Activated CD4-positive, alpha-beta T cell treated with anti-CD3 and anti-CD28 coated beads for 36 hours (primary cell): ENCODE measurements at regions of chr11 and their contacts with region 1.

Region 1: DNA sequence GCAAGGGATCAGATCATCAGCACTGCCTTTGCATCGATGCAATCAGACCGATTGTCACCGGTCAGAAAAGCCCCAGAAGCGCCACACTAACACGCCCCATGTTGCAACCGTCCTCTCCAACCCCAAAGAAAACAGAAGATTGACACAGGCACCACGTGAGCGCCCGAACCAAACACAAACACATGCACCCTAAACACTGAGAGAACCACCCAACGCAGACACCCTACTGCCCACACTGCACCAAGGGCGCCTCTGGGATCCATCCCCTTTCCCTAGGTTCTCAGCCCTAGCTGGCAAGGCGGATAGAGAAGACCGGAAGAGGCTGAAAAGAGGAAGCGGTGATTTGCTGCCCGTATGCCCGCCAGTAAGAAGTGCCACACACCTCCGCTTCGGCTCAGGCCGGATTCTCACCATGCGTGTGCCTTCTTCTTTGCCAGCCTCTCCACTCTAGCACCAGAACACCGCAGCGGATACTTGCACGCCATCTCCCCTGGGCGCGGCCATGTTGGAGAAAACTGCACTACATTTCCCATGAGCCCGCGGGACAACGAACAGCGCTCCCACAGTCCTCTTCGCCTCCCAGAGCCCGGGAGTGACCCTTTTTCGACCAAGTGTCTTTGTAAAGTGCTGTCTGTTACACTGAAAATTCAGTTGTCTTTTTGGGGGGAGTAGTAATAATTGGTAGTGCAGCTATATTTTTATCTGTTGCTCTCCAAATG is at the start of gene ALKBH8:
- DNase-seq: peak; percentile 90
- ATAC-seq: peak; percentile 92
- H3K4me3 Mint-ChIP-seq: peak within 1 kb of the TSS; percentile 93
- H3K27ac Mint-ChIP-seq: peak within 1 kb of the TSS; percentile 98
- H3K4me1 Mint-ChIP-seq: peaks cover 54% of the 10 kb centered on the region
- H3K27me3 Mint-ChIP-seq: no peaks in the 10 kb centered on the region
- total RNA-seq, gene ALKBH8: 11.4 to 12.6 TPM

Region 2: GRCh38 chr11:107457558-107458271 is 107.7 kb before region 1 on chr11 and contains the start of gene CWF19L2:
- CTCF ChIA-PET with region 1: interaction called, 3 read pairs
- POLR2A ChIA-PET with region 1: no interaction called
- intact Hi-C with region 1: loop called (anchors 1 to 2 kb)
- DNase-seq: peak; percentile 94
- ATAC-seq: peak; percentile 99
- H3K4me3 Mint-ChIP-seq: peak within 1 kb of the TSS; percentile 84
- H3K27ac Mint-ChIP-seq: peak within 1 kb of the TSS; percentile 95
- H3K4me1 Mint-ChIP-seq: peaks cover 21% of the 10 kb centered on the region
- H3K27me3 Mint-ChIP-seq: no peaks in the 10 kb centered on the region
- total RNA-seq, gene CWF19L2: 14.1 to 14.3 TPM

Region 3: GRCh38 chr11:107590460-107591377 is 25.3 kb after region 1 on chr11 and contains the start of gene ELMOD1:
- CTCF ChIA-PET with region 1: interaction called, 7 read pairs
- POLR2A ChIA-PET with region 1: interaction called, 3 read pairs
- intact Hi-C with region 1: loop called in 1 of 2 experiments (anchors 1 kb)
- DNase-seq: peak; percentile 69
- ATAC-seq: peak; percentile 66
- H3K4me3 Mint-ChIP-seq: peak within 1 kb of the TSS; percentile 73
- H3K27ac Mint-ChIP-seq: peak within 1 kb of the TSS; percentile 66
- H3K4me1 Mint-ChIP-seq: peaks cover 19% of the 10 kb centered on the region
- H3K27me3 Mint-ChIP-seq: peaks cover 67% of the 10 kb centered on the region
- total RNA-seq, gene ELMOD1: not detected

Region 4: DNA sequence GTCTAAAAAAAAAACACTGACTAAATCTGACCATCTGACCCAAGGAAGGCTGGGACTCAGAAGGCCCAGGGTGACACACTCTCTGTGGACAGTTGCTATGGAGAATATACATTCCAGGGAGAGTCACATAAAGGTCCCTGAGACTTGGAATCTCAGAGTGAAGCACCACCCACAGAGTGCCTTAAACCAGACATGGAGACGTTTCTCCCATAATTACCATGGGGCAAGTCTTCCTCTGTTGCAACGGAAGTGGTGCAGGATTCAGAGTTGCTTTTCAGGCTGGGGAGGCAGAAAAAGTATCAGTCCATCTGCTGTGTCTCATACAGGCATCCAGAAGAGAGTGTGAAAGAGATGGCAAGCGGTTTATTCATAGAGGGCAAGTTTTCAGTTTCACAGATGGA is 205.2 kb after region 1 on chr11:
- CTCF ChIA-PET with region 1: interaction called, 9 read pairs
- POLR2A ChIA-PET with region 1: interaction called, 9 read pairs
- intact Hi-C with region 1: loop called in 1 of 2 experiments (anchors 5 kb)
- DNase-seq: no peak
- ATAC-seq: peak; percentile 35
- H3K4me3 Mint-ChIP-seq: no peak overlapping the region
- H3K27ac Mint-ChIP-seq: no peak overlapping the region
- H3K4me1 Mint-ChIP-seq: peaks cover 9% of the 10 kb centered on the region
- H3K27me3 Mint-ChIP-seq: peaks cover 6% of the 10 kb centered on the region

Region 5: DNA sequence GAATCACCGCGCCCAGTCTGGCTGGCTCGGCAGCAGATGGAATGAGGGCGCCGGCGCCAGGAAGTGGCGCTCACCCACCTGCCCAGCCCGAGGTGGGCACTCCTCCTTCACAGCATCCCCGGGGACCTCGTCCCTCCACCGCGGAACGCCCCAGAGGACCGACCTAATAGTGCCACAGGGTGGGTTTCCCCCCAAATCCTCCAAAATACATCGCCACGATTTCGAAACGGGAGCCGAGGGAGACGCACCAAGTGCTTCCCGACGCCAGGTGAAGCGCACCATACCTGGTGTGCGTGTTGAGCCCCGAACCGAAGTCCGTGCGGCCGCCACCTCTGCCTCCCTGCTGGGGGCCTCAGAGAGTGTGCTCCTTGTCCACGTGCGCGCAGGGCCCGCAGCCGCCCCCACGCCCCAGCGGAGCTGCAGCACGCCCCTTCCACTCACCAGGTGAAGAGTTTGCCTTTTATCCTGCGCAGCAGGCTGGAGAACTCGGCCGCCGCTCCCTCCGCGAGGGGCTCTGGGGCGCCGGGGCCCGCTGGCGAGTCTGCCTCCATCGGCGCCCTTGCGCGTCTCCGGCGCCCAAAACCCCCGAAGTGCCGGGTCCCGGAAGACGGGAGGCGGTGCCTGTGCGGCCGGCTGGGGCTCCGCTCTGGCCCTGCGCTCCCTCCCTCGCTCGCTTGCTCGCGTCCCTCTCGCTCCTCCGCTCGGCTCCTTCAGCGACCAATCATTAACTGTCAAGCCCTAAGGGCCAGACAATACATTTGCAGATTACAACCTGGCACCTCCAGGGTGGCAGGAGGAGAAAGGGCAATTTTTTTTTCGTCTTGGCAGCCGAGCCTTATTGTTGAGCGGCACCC is 293.1 kb after region 1 on chr11 and contains the start of gene SLC35F2:
- CTCF ChIA-PET with region 1: interaction called, 3 read pairs
- POLR2A ChIA-PET with region 1: no interaction called
- intact Hi-C with region 1: loop called in 1 of 2 experiments (anchors 1 kb)
- DNase-seq: peak; percentile 86
- ATAC-seq: peak; percentile 88
- H3K4me3 Mint-ChIP-seq: peak within 1 kb of the TSS; percentile 92
- H3K27ac Mint-ChIP-seq: peak within 1 kb of the TSS; percentile 94
- H3K4me1 Mint-ChIP-seq: peaks cover 31% of the 10 kb centered on the region
- H3K27me3 Mint-ChIP-seq: no peaks in the 10 kb centered on the region
- total RNA-seq, gene SLC35F2: 24.5 to 25.5 TPM

Region 6: GRCh38 chr11:108467091-108467823 is 901.9 kb after region 1 on chr11 and contains the start of gene C11orf65:
- CTCF ChIA-PET with region 1: no interaction called
- POLR2A ChIA-PET with region 1: no interaction called
- intact Hi-C with region 1: loop called in 1 of 2 experiments (anchors 10 kb)
- DNase-seq: peak; percentile 97
- ATAC-seq: peak; percentile 98
- H3K4me3 Mint-ChIP-seq: peak within 1 kb of the TSS; percentile 99
- H3K27ac Mint-ChIP-seq: peak within 1 kb of the TSS; percentile 98
- H3K4me1 Mint-ChIP-seq: peaks cover 12% of the 10 kb centered on the region
- H3K27me3 Mint-ChIP-seq: no peaks in the 10 kb centered on the region
- total RNA-seq, gene C11orf65: 3.4 to 3.6 TPM

Region 7: GRCh38 chr11:108664730-108665525 is 1099.5 kb after region 1 on chr11 and contains the start of gene DDX10:
- CTCF ChIA-PET with region 1: no interaction called
- POLR2A ChIA-PET with region 1: no interaction called
- intact Hi-C with region 1: loop called in 1 of 2 experiments (anchors 5 kb)
- DNase-seq: peak; percentile 99
- ATAC-seq: peak; percentile 99
- H3K4me3 Mint-ChIP-seq: peak within 1 kb of the TSS; percentile 99
- H3K27ac Mint-ChIP-seq: peak within 1 kb of the TSS; percentile 91
- H3K4me1 Mint-ChIP-seq: peaks cover 37% of the 10 kb centered on the region
- H3K27me3 Mint-ChIP-seq: no peaks in the 10 kb centered on the region
- total RNA-seq, gene DDX10: 45.8 to 50.9 TPM